Natural killer cell (primary cell): ENCODE measurements at regions of chr3 and their contacts with region 1.

Region 1: DNA sequence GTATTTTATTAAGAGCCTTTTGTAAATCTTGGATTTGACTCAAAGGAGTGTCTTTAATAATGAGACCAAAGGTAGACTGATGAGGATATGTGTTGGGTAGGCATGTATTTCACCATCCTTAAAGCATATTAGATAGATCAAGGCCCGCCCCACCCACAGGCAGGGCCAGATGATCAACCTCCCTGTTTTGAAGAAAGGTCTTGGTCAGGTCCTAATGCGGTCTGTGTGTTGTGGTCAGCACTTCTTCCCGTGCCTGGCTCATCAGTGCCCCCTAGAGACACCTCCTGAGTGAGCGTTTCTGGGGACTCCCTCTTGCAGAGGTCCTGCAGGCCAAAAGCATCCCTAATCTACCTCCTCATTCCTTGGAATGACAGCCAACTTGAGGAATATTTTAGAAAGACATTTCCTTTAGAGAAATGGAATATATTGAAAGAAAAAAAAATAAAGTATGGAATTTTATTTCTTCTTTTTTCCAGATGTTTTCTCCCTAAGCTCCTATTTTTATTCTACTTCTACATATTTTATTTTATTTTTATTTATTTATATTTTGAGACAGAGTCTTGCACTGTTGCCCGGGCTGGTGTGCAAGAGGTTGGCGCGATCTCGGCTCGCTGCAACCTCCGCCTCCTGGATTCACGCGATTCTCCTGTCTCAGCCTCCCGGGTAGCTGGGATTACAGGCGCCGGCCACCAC is 6.0 kb downstream of the TM4SF4 start:
- DNase-seq: peak; percentile 43 to 44
- ATAC-seq: peak; percentile 87 to 94 (median 88)
- H3K4me3 ChIP-seq: no peak overlapping the region
- H3K4me3 Mint-ChIP-seq: no peak overlapping the region
- H3K27ac ChIP-seq: no peak overlapping the region
- H3K27ac Mint-ChIP-seq: no peak overlapping the region
- H3K4me1 ChIP-seq: peaks cover 8% of the 10 kb centered on the region
- H3K4me1 Mint-ChIP-seq: peaks cover 0 to 6% of the 10 kb centered on the region in 2 donors
- H3K27me3 ChIP-seq: no peaks in the 10 kb centered on the region
- H3K27me3 Mint-ChIP-seq: no peaks in the 10 kb centered on the region
- CTCF ChIP-seq: peak; percentile 58

Region 2: DNA sequence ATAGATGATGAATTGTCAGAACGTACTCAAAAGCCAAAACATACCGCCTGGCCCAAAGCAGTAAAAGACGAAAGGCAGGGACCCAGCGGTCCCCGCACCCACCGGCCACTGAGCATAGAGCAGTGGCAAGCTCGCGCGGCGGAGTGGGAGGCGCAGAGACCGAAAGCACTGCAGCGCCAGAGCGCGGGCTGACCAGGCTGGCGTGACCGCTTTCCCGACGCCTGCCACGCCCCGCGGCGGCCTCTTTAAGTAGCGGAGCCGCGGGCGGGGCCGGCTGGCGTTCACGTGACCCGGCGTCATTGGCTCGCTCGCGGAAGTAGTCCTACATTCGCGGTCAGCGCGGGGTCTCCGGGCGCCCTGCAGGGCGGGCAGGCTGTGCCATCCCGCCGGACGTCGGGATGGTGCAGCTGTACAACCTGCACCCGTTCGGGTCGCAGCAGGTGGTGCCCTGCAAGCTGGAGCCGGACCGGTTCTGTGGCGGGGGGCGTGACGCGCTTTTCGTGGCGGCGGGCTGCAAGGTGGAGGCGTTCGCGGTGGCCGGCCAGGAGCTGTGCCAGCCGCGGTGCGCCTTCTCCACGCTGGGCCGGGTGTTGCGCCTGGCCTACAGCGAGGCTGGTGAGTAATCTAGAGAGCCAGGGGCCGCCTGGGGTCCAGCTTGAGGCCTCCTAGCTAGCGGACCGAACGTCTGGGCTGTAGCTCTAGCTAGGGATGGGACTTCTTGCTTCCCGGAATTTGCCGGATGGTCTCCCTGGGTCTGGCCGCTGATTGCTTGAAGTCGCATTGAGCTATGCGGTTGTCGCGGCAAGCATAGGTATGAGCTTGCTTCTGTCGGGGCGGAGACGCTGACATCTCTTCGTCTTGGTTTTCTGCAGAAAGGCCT is 350.9 kb before region 1 on chr3 and contains the start of gene HPS3:
- intact Hi-C with region 1: loop called (anchors 10 kb)
- DNase-seq: peak; percentile 82 to 91
- ATAC-seq: peak; percentile 82 to 91 (median 88)
- H3K4me3 ChIP-seq: peak within 1 kb of the TSS; percentile 80
- H3K4me3 Mint-ChIP-seq: peak within 1 kb of the TSS; percentile 94
- H3K27ac ChIP-seq: peak within 1 kb of the TSS; percentile 74
- H3K27ac Mint-ChIP-seq: peak within 1 kb of the TSS; percentile 91 to 96
- H3K4me1 ChIP-seq: peaks cover 21% of the 10 kb centered on the region
- H3K4me1 Mint-ChIP-seq: peaks cover 42 to 48% of the 10 kb centered on the region in 2 donors
- H3K27me3 ChIP-seq: no peaks in the 10 kb centered on the region
- H3K27me3 Mint-ChIP-seq: peaks cover 0 to 2% of the 10 kb centered on the region in 2 donors
- CTCF ChIP-seq: no peak
- total RNA-seq, gene HPS3: 19.6 to 35.5 (median 24.7) TPM

Region 3: GRCh38 chr3:149352556-149352955 is 127.9 kb before region 1 on chr3:
- intact Hi-C with region 1: loop called (anchors 5 kb)
- DNase-seq: peak in 1 of 2 donors; percentile 29
- ATAC-seq: peak; percentile 70 to 92 (median 75)
- H3K4me3 ChIP-seq: no peak overlapping the region
- H3K4me3 Mint-ChIP-seq: no peak overlapping the region
- H3K27ac ChIP-seq: no peak overlapping the region
- H3K27ac Mint-ChIP-seq: no peak overlapping the region
- H3K4me1 ChIP-seq: no peaks in the 10 kb centered on the region
- H3K4me1 Mint-ChIP-seq: no peaks in the 10 kb centered on the region
- H3K27me3 ChIP-seq: no peaks in the 10 kb centered on the region
- H3K27me3 Mint-ChIP-seq: peaks cover 10 to 12% of the 10 kb centered on the region in 2 donors
- CTCF ChIP-seq: peak; percentile 63

Region 4: GRCh38 chr3:149393345-149394160 is 86.9 kb before region 1 on chr3:
- intact Hi-C with region 1: loop called (anchors 1 kb)
- DNase-seq: peak in 1 of 2 donors; percentile 38
- ATAC-seq: peak; percentile 63 to 81 (median 72)
- H3K4me3 ChIP-seq: no peak overlapping the region
- H3K4me3 Mint-ChIP-seq: no peak overlapping the region
- H3K27ac ChIP-seq: no peak overlapping the region
- H3K27ac Mint-ChIP-seq: no peak overlapping the region
- H3K4me1 ChIP-seq: no peaks in the 10 kb centered on the region
- H3K4me1 Mint-ChIP-seq: no peaks in the 10 kb centered on the region
- H3K27me3 ChIP-seq: no peaks in the 10 kb centered on the region
- H3K27me3 Mint-ChIP-seq: no peaks in the 10 kb centered on the region
- CTCF ChIP-seq: peak; percentile 60